GM12878 (cell line): ENCODE measurements at regions of chr7 and their contacts with region 1.

Region 1: GRCh38 chr7:23431702-23432199 is 38.5 kb downstream of the IGF2BP3 start:
- DNase-seq: no peak
- ATAC-seq: peak; percentile 14; the same call in 2 of the 3 replicates
- H3K4me3 ChIP-seq: no peak overlapping the region
- H3K27ac ChIP-seq: no peak overlapping the region
- H3K4me1 ChIP-seq: peaks cover 7% of the 10 kb centered on the region; the same call in 1 of the 2 replicates
- H3K27me3 ChIP-seq: no peaks in the 10 kb centered on the region
- CTCF ChIP-seq: no peak
- EP300 ChIP-seq: no peak
- POLR2A ChIP-seq: no peak
- RAD21 ChIP-seq: no peak

Region 2: DNA sequence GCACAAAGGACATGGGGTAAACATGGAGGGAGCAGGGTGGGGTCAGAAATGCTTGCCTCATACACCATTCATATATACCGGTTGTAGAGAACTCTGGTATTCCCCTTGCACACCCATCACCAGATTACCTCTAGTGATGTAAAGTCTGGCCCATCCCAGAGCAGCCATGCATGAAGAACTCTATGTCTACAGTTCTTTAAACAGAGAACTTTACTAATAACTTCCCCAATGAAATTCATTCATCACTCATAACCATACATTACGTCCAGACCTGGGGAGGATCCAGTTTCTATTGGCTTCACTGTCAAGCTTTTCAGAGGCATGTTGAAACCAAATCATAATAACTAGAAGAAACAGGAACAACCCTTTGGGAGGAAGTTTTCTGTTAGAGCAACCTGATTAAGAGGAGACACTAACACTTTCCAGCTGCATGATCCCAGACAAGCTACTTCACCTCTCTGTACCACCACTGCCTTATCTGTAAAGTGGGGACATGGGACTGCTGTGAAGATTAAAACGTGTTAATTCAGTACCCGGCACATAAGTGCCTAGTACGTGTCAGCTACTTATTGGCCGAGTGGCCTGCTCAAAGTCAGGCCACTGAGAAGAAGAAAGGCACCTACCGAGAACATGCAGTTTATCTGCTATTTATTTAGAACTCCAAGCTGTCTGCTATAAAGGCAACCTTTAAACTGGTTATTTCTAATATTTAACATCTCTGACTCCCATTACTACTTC is 21.1 kb before region 1 on chr7:
- CTCF ChIA-PET with region 1: interaction called, 17 read pairs
- POLR2A ChIA-PET with region 1: interaction called, 3 read pairs
- RAD21 ChIA-PET with region 1: interaction called, 8 read pairs
- SMC1A ChIA-PET with region 1: interaction called, 6 read pairs
- in situ Hi-C with region 1: no loop called
- intact Hi-C with region 1: no loop called
- DNase-seq: peak; percentile 89
- ATAC-seq: peak; percentile 97
- H3K4me3 ChIP-seq: no peak overlapping the region; the same call in 1 of the 2 replicates
- H3K27ac ChIP-seq: peak overlapping the region; percentile 82
- H3K4me1 ChIP-seq: peaks cover 20% of the 10 kb centered on the region
- H3K27me3 ChIP-seq: no peaks in the 10 kb centered on the region
- CTCF ChIP-seq: no peak
- EP300 ChIP-seq: peak; percentile 65 to 69; a peak in 3 of 4 replicates
- POLR2A ChIP-seq: no peak
- RAD21 ChIP-seq: no peak

Region 3: GRCh38 chr7:23445326-23445725 is 13.6 kb after region 1 on chr7:
- CTCF ChIA-PET with region 1: interaction called, 33 read pairs
- POLR2A ChIA-PET with region 1: interaction called, 5 read pairs
- RAD21 ChIA-PET with region 1: interaction called, 11 read pairs
- SMC1A ChIA-PET with region 1: interaction called, 53 read pairs
- in situ Hi-C with region 1: no loop called
- intact Hi-C with region 1: no loop called
- DNase-seq: no peak
- ATAC-seq: peak; percentile 74
- H3K4me3 ChIP-seq: no peak overlapping the region
- H3K27ac ChIP-seq: no peak overlapping the region; the same call in 1 of the 2 replicates
- H3K4me1 ChIP-seq: peaks cover 17% of the 10 kb centered on the region
- H3K27me3 ChIP-seq: no peaks in the 10 kb centered on the region
- CTCF ChIP-seq: no peak
- EP300 ChIP-seq: peak in 1 of 2 experiments; percentile 70; a peak in 1 of 4 replicates
- POLR2A ChIP-seq: no peak
- RAD21 ChIP-seq: no peak

Region 4: GRCh38 chr7:23467806-23468516 is 36.2 kb after region 1 on chr7:
- CTCF ChIA-PET with region 1: interaction called, 25 read pairs
- POLR2A ChIA-PET with region 1: interaction called, 7 read pairs
- RAD21 ChIA-PET with region 1: interaction called, 14 read pairs
- SMC1A ChIA-PET with region 1: interaction called, 13 read pairs
- in situ Hi-C with region 1: no loop called
- intact Hi-C with region 1: loop called (anchors 2 kb)
- DNase-seq: no peak
- ATAC-seq: peak; percentile 31
- H3K4me3 ChIP-seq: peak overlapping the region; percentile 96
- H3K27ac ChIP-seq: peak overlapping the region; percentile 94
- H3K4me1 ChIP-seq: peaks cover 10% of the 10 kb centered on the region
- H3K27me3 ChIP-seq: no peaks in the 10 kb centered on the region
- CTCF ChIP-seq: no peak
- EP300 ChIP-seq: no peak
- POLR2A ChIP-seq: no peak; the same call in 1 of the 2 replicates
- RAD21 ChIP-seq: no peak

Region 5: DNA sequence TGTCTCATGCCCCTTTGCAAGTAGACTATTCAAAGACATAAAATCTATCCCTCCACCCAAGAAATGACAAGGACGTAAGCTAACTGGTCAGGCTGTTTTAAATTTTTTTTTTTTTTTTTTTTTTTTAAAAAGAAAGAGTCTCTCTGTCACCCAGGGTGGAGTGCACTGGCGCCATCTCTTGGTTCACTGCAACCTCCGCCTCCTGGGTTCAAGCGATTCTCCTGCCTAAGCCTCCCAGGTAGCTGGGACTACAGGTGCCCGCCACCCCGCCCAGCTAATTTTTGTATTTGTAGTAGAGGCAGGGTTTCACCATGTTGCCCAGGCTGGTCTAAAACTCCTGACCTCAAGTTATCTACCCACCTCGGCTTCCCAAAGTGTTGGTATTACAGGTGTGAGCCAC is 88.8 kb after region 1 on chr7:
- CTCF ChIA-PET with region 1: interaction called, 14 read pairs
- POLR2A ChIA-PET with region 1: interaction called, 3 read pairs
- RAD21 ChIA-PET with region 1: interaction called, 3 read pairs
- SMC1A ChIA-PET with region 1: interaction called, 15 read pairs
- in situ Hi-C with region 1: no loop called
- intact Hi-C with region 1: no loop called
- DNase-seq: no peak
- ATAC-seq: no peak
- H3K4me3 ChIP-seq: no peak overlapping the region
- H3K27ac ChIP-seq: no peak overlapping the region
- H3K4me1 ChIP-seq: peaks cover 5% of the 10 kb centered on the region
- H3K27me3 ChIP-seq: no peaks in the 10 kb centered on the region
- CTCF ChIP-seq: no peak
- EP300 ChIP-seq: no peak
- POLR2A ChIP-seq: no peak
- RAD21 ChIP-seq: 0 out of 2 replicates have a peak, but pooled peaks have one; percentile 12

Region 6: DNA sequence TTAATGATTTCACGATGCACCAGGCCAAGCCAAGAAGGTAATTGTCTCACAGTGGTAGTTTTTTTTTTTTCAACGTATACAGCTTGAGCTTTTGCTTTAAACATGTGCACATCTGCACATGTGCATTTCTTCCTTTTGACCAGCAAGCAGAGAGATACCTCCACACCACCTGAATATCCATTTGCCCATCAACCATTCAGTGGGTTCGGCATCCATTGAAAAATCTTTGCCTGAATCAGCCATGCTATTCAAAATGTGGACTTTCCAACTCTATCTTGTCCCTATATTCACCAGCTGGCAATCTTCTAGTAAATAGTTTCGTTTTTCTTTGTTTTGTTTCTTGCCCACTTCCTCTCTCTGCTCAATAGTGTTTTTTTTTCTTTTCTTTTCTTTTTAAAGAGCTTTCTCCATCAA is 107.8 kb after region 1 on chr7:
- CTCF ChIA-PET with region 1: interaction called, 47 read pairs
- POLR2A ChIA-PET with region 1: interaction called, 6 read pairs
- RAD21 ChIA-PET with region 1: interaction called, 25 read pairs
- SMC1A ChIA-PET with region 1: interaction called, 27 read pairs
- in situ Hi-C with region 1: no loop called
- intact Hi-C with region 1: no loop called
- DNase-seq: peak; percentile 62
- ATAC-seq: peak; percentile 80
- H3K4me3 ChIP-seq: no peak overlapping the region
- H3K27ac ChIP-seq: peak overlapping the region; percentile 79
- H3K4me1 ChIP-seq: peaks cover 15% of the 10 kb centered on the region
- H3K27me3 ChIP-seq: no peaks in the 10 kb centered on the region
- CTCF ChIP-seq: no peak
- EP300 ChIP-seq: no peak
- POLR2A ChIP-seq: no peak
- RAD21 ChIP-seq: no peak